Left lung (tissue), 14 donors: ENCODE measurements at regions of chr17 and their contacts with region 1.

Region 1: GRCh38 chr17:43483674-43484372 is at the start of gene DHX8:
- DNase-seq: peak; percentile 97 to 99 (median 99)
- ATAC-seq: peak; percentile 99
- H3K4me3 ChIP-seq: peak within 1 kb of the TSS; percentile 57 to 80
- H3K27ac ChIP-seq: peak within 1 kb of the TSS; percentile 78 to 92
- H3K4me1 ChIP-seq: peaks cover 16 to 44% of the 10 kb centered on the region in 2 donors
- H3K27me3 ChIP-seq: no peaks in the 10 kb centered on the region
- CTCF ChIP-seq: peak; percentile 100
- polyA plus RNA-seq, gene DHX8: 42.7 to 48.4 (median 44.7) TPM

Region 2: GRCh38 chr17:43393944-43394482 is 89.8 kb before region 1 on chr17:
- intact Hi-C with region 1: loop called in 1 of 2 experiments (anchors 2 kb)
- DNase-seq: peak in 3 of 4 donors; percentile 86 to 92 (median 89)
- ATAC-seq: peak; percentile 68
- H3K4me3 ChIP-seq: no peak overlapping the region
- H3K27ac ChIP-seq: peak overlapping the region in 1 of 2 donors; percentile 55
- H3K4me1 ChIP-seq: peaks cover 4 to 37% of the 10 kb centered on the region in 2 donors
- H3K27me3 ChIP-seq: no peaks in the 10 kb centered on the region
- CTCF ChIP-seq: peak; percentile 90 to 92

Region 3: DNA sequence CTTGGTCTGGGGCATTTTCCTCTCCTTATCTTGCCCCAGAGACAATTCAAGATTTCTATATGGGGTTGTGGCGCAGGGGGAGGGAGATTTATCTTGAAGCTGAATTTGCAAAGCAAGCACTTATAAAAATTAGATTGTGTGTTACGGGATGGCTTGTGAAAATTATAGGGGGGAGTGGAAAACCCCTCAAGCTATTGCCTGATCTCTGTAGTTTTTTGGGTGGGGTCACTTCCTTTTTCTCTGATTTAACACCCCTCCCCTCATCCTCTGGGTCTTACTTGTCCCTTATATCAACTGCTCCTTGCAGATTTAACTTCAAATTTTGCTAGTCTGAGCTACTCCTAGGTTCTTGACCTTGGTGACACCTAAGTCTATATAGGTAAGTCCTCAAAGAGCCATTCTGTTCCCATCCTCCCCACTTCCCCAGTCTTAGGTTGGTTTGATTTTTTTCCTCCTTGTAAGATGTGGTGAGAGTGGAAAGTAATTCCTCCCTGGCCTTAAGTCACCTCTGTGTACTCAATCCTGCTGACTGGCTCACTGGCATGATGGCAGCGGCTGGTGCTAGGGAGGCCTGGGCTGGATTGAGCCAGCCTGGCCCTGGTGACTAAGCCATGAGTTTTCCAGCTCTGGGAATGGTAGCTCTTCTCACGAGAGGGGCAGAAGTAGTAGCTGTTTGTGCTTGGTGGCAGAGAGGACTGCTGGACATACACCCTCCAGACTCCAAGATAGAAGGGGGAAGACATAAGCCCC is 82.7 kb before region 1 on chr17:
- intact Hi-C with region 1: loop called in 1 of 2 experiments (anchors 5 kb)
- DNase-seq: peak in 1 of 4 donors; percentile 67
- ATAC-seq: peak; percentile 80
- H3K4me3 ChIP-seq: peak overlapping the region in 1 of 2 donors; percentile 58
- H3K27ac ChIP-seq: no peak overlapping the region
- H3K4me1 ChIP-seq: peaks cover 5 to 40% of the 10 kb centered on the region in 2 donors
- H3K27me3 ChIP-seq: no peaks in the 10 kb centered on the region
- CTCF ChIP-seq: no peak

Region 4: GRCh38 chr17:43546319-43547188 is 62.7 kb after region 1 on chr17 and contains the start of gene ETV4:
- intact Hi-C with region 1: no loop called
- DNase-seq: peak; percentile 79 to 95 (median 92)
- ATAC-seq: peak; percentile 92
- H3K4me3 ChIP-seq: peak within 1 kb of the TSS; percentile 44 to 50
- H3K27ac ChIP-seq: no peak within 1 kb of the TSS
- H3K4me1 ChIP-seq: peaks cover 6 to 19% of the 10 kb centered on the region in 2 donors
- H3K27me3 ChIP-seq: peaks cover 0 to 67% of the 10 kb centered on the region in 2 donors
- CTCF ChIP-seq: no peak
- polyA plus RNA-seq, gene ETV4: 8.2 to 24.3 (median 17.7) TPM

Region 5: DNA sequence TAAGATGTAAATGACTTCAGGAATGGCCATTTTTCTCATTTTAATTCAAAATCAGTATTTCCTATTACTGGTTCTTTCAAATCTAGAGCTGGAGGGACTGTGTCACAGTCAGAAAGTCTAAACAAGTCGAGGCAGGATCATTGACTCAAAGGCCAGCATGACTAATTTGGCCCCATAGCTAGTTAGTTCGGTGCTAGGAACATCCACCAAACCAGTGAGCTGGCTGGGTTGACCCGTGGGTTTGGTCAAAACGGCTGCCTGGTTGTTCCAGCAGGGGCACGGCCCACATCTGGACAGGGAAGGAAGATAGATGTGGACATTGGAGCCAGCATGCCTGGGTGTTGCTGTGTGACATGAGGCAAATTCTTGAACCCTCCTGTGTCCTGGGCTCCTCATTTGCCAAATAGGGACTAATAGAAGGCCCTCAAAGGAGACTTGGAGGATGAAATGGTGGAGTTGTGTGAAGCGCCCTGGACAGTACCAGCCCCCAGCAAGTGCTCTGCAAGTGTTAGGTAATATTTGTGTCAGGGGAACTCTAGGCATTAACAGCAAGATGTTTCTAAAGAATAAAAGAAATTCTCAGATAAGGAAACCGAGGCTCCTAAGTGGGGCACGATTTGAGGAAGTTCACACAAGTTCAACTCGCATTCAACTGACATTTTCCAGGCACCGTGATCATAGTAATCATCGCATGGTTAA is 131.7 kb after region 1 on chr17:
- intact Hi-C with region 1: no loop called
- DNase-seq: no peak
- ATAC-seq: no peak
- H3K4me3 ChIP-seq: no peak overlapping the region
- H3K27ac ChIP-seq: no peak overlapping the region
- H3K4me1 ChIP-seq: no peaks in the 10 kb centered on the region
- H3K27me3 ChIP-seq: no peaks in the 10 kb centered on the region
- CTCF ChIP-seq: no peak